Activated naive CD4-positive, alpha-beta T cell treated with anti-CD3 and anti-CD28 coated beads for 36 hours (primary cell): ENCODE measurements at regions of chr3 and their contacts with region 1.

Region 1: GRCh38 chr3:192444096-192444790 is 283.1 kb downstream of the FGF12 start:
- DNase-seq: peak; percentile 69
- H3K4me3 Mint-ChIP-seq: no peak overlapping the region
- H3K27ac Mint-ChIP-seq: no peak overlapping the region
- H3K4me1 Mint-ChIP-seq: no peaks in the 10 kb centered on the region
- H3K27me3 Mint-ChIP-seq: peaks cover 34% of the 10 kb centered on the region

Region 2: DNA sequence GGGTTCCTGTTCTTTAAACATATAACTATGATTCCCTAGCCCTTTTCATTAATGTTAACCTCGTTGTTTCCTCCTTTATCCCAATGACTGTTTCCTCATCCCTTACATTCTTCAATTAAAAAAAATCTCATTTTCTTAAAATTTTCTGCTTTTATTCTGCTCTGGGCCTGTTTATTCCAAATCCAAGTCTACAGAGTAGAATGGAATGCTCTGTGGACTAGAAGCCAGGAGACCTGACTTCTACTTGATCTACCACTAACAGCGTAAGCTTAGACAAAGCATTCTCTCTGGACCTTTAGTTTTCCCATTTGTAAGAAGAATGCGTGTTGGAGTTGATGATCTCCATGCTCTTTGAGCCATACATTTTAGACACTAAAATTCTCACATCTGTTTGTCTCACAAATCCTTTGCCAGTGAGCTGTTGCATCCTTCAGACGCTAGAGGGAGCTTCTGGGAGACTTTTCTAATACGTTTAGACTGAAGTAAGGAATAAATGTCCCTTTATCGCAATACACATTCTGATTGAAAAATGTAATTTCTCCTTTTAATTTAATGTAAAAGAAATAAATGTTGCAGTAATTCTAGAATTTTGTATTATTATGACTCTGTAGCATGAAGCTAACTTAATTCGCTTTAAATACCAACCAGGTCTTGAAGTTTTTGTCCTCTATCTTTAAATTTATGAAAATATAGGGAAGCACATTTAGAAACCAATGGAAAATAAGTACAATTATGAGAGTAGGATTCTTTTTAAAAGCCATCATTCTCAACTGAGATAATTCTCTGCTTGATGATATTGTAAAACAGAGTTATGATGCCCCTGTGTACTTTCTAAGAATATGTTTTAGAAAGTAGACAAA is 1560.0 kb before region 1 on chr3:
- CTCF ChIA-PET with region 1: no interaction called
- intact Hi-C with region 1: loop called (anchors 2 kb)
- DNase-seq: peak; percentile 57
- H3K4me3 Mint-ChIP-seq: no peak overlapping the region
- H3K27ac Mint-ChIP-seq: no peak overlapping the region
- H3K4me1 Mint-ChIP-seq: no peaks in the 10 kb centered on the region
- H3K27me3 Mint-ChIP-seq: peaks cover 7% of the 10 kb centered on the region

Region 3: GRCh38 chr3:191244242-191244867 is 1199.9 kb before region 1 on chr3:
- CTCF ChIA-PET with region 1: no interaction called
- intact Hi-C with region 1: loop called (anchors 5 kb)
- DNase-seq: no peak
- H3K4me3 Mint-ChIP-seq: no peak overlapping the region
- H3K27ac Mint-ChIP-seq: no peak overlapping the region
- H3K4me1 Mint-ChIP-seq: peaks cover 2% of the 10 kb centered on the region
- H3K27me3 Mint-ChIP-seq: no peaks in the 10 kb centered on the region

Region 4: DNA sequence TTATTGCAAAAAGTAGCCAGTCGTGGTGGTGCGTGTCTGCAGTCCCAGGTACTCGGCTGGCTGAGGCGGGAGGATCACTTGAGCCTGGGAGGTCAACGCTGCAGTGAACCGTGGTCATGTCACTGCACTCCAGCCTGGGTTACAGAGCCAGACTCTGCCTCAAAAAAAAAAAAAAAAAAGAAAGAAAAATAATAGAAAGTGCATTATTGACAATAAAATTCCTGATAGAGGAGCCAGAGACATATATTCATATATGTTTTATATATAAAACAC is 1026.8 kb before region 1 on chr3:
- CTCF ChIA-PET with region 1: interaction called, 3 read pairs
- intact Hi-C with region 1: loop called (anchors 1 kb)
- DNase-seq: no peak
- H3K4me3 Mint-ChIP-seq: no peak overlapping the region
- H3K27ac Mint-ChIP-seq: no peak overlapping the region
- H3K4me1 Mint-ChIP-seq: no peaks in the 10 kb centered on the region
- H3K27me3 Mint-ChIP-seq: no peaks in the 10 kb centered on the region

Region 5: DNA sequence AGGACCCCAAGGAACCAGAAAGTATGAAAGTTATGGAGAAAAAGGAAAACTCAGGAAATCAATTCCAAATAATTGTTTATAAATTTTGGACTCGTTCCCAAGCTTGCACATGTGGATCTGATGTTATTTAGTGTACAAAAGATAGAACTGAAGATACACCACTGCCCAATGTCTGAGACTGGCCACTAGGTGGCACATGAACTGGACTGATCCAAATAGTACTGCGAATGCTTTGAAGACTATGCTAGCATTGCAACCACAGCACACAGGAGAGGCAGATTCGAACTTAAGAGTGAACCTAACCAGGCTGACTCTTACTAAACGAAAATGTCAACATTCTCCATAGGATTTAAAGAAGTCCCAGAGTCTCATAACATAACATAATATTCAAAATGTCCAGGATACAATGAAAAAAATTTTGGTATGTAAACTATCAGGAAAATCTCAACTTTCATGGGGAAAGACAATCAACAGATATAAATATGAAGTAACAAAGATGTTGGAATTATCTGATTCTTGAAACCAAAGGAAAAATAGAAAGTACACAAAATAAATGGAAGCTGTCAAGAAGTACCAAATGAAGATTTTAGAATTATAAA is 313.6 kb before region 1 on chr3:
- CTCF ChIA-PET with region 1: interaction called, 4 read pairs
- intact Hi-C with region 1: loop called (anchors 1 kb)
- DNase-seq: peak; percentile 26
- H3K4me3 Mint-ChIP-seq: no peak overlapping the region
- H3K27ac Mint-ChIP-seq: no peak overlapping the region
- H3K4me1 Mint-ChIP-seq: no peaks in the 10 kb centered on the region
- H3K27me3 Mint-ChIP-seq: no peaks in the 10 kb centered on the region

Region 6: DNA sequence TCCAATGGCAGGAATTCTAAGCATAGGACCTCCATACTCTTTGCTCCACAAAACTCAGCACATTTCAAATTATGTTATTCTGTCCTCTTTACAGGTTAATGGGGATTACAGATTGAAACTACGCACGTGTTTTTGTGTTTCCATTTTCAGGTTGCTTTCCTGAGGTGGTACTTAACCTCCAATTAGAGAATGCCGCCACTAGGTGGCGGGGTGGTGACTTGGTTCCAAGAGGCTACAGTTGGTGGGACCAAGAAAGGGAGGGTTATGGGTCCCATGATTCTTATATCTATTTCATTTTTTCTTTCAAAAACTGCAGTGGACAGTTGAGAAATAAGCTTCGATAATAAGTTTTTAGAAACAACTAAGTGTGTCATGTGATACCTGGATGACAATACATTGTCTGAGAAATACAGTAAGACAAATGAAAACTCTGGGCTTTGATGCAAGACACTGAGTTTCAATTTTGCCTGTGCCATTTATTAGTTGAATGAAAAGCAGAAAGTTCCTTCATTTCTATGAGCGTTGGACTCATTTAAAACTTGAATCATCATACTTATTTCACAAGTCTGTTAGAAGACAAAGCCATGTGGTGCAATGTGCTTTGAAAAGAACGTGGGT is 255.9 kb before region 1 on chr3:
- CTCF ChIA-PET with region 1: interaction called, 15 read pairs
- intact Hi-C with region 1: loop called (anchors 1 kb)
- DNase-seq: peak; percentile 59
- H3K4me3 Mint-ChIP-seq: no peak overlapping the region
- H3K27ac Mint-ChIP-seq: no peak overlapping the region
- H3K4me1 Mint-ChIP-seq: peaks cover 5% of the 10 kb centered on the region
- H3K27me3 Mint-ChIP-seq: no peaks in the 10 kb centered on the region

Region 7: DNA sequence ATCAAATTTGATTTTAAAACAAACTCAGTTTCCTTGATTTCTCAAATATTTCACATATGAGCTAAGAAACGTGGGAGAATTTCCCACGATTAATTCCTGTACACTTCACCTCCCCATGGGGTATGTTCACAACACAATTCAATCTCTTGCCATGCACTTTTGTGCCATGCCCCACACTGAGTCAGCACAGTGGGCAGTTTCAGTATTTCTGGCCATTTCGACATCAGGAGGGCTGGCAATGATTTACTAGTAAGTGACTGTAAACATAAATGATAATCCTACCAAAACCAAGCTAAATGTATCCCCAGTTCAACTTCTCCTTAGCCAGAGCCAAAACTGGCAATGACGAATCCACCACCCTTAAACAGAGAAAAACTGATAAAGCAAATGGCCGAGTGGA is 10.5 kb before region 1 on chr3:
- CTCF ChIA-PET with region 1: interaction called, 14 read pairs
- intact Hi-C with region 1: no loop called
- DNase-seq: no peak
- H3K4me3 Mint-ChIP-seq: no peak overlapping the region
- H3K27ac Mint-ChIP-seq: no peak overlapping the region
- H3K4me1 Mint-ChIP-seq: no peaks in the 10 kb centered on the region
- H3K27me3 Mint-ChIP-seq: peaks cover 9% of the 10 kb centered on the region